Dorsolateral prefrontal cortex (tissue), 120 donors: ENCODE measurements at regions of chrX and their contacts with region 1.

Region 1: GRCh38 chrX:16882702-16883486 is 12.7 kb upstream of the RBBP7 start:
- DNase-seq: peak in 9 of 10 donors; percentile 48 to 80 (median 64)
- H3K4me3 ChIP-seq: peak overlapping the region; percentile 29 to 69 (median 49)
- H3K27ac ChIP-seq: peak overlapping the region in 56 of 59 donors; percentile 3 to 90 (median 74)
- H3K27me3 ChIP-seq: peaks cover 0 to 82% (median 29%) of the 10 kb centered on the region in 45 donors
- CTCF ChIP-seq: peak; percentile 45 to 78 (median 62)

Region 2: GRCh38 chrX:16826207-16826606 is 56.7 kb before region 1 on chrX:
- intact Hi-C with region 1: loop called in 1 of 2 experiments (anchors 10 kb)
- DNase-seq: no peak
- H3K4me3 ChIP-seq: no peak overlapping the region
- H3K27ac ChIP-seq: peak overlapping the region in 34 of 59 donors; percentile 3 to 77 (median 44)
- H3K27me3 ChIP-seq: peaks cover 0 to 8% (median 0%) of the 10 kb centered on the region in 45 donors
- CTCF ChIP-seq: peak; percentile 24 to 85 (median 66)

Region 3: GRCh38 chrX:16870095-16870860 is 12.6 kb before region 1 on chrX and contains the start of gene RBBP7:
- intact Hi-C with region 1: loop called in 1 of 2 experiments (anchors 1 kb)
- DNase-seq: peak; percentile 83 to 96 (median 88)
- H3K4me3 ChIP-seq: peak within 1 kb of the TSS; percentile 34 to 80 (median 68)
- H3K27ac ChIP-seq: peak within 1 kb of the TSS; percentile 77 to 98 (median 93)
- H3K27me3 ChIP-seq: peaks cover 0 to 86% (median 37%) of the 10 kb centered on the region in 45 donors
- CTCF ChIP-seq: peak in 1 of 56 donors; percentile 3
- total RNA-seq, gene RBBP7: 52.6 to 124 (median 81.9) TPM

Region 4: DNA sequence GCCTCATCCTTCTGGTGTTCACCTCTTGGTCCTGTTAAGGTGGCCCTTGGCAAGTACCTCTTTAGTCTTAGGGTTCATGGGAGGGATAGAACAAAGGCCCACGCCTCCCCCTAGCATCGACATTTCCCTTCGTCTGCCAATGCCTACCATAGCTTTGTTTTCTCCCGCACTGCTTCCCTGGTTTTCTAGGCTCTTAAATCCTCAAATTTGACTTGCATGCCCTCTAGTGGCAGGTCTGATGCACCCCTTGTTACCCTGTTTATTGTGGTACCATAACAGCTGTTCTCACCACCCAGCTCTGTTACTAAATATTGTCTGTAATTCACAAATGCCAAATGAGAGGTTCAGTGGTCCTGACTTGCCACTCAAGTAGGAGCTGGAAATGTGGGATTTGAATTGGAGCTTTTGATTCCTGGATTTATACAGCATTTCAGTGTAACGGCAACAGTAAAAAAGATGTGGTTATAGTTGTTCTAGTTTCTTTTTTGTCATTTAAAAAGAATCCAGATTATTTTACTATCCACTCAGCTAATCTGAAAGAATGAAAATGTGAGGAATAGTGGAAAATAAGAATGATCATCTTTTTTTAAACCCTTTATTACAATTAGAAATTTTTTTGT is 163.7 kb after region 1 on chrX:
- intact Hi-C with region 1: loop called in 1 of 2 experiments (anchors 2 kb)
- DNase-seq: peak in 7 of 10 donors; percentile 25 to 81 (median 54)
- H3K4me3 ChIP-seq: no peak overlapping the region
- H3K27ac ChIP-seq: peak overlapping the region in 40 of 59 donors; percentile 4 to 75 (median 47)
- H3K27me3 ChIP-seq: peaks cover 0 to 45% (median 3%) of the 10 kb centered on the region in 45 donors
- CTCF ChIP-seq: peak; percentile 36 to 84 (median 71)

Region 5: DNA sequence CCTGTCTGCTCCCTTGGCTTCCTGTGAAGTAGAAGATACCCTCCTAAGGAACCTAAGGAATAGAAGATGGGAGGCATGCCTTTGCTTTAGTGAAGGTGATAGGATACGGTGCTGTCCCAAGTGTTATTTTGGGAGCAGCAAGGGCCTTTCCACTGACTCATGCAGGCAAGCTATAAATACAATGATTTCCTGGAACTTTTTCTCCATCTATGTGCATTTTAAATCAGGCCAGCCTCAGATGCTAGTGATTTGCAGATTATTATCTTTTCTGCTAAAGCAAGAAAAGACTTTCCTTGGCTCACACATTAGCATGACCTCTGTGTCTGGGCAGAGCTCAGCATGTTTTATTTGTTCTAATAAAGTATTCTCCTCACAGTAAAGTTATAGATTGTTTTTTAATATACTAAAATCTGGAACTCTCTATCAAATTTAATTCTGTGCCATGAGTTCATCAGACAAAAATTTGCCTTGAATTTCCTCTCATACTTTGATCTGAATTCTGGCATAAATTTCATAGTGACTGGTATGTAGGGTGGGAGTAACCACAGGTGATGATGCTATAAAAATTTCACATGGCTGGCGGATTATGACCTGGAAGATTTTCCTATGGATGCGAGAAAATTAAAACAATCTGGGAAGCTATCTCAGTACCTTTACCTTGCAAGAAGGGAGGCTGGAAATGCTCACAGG is 195.3 kb after region 1 on chrX:
- intact Hi-C with region 1: loop called in 1 of 2 experiments (anchors 10 kb)
- DNase-seq: peak in 1 of 10 donors; percentile 29
- H3K4me3 ChIP-seq: no peak overlapping the region
- H3K27ac ChIP-seq: peak overlapping the region in 14 of 59 donors; percentile 4 to 55 (median 36)
- H3K27me3 ChIP-seq: peaks cover 0 to 65% (median 21%) of the 10 kb centered on the region in 45 donors
- CTCF ChIP-seq: no peak